ENCODE measurements at regions of chr19 and their contacts with region 1.

Region 1: DNA sequence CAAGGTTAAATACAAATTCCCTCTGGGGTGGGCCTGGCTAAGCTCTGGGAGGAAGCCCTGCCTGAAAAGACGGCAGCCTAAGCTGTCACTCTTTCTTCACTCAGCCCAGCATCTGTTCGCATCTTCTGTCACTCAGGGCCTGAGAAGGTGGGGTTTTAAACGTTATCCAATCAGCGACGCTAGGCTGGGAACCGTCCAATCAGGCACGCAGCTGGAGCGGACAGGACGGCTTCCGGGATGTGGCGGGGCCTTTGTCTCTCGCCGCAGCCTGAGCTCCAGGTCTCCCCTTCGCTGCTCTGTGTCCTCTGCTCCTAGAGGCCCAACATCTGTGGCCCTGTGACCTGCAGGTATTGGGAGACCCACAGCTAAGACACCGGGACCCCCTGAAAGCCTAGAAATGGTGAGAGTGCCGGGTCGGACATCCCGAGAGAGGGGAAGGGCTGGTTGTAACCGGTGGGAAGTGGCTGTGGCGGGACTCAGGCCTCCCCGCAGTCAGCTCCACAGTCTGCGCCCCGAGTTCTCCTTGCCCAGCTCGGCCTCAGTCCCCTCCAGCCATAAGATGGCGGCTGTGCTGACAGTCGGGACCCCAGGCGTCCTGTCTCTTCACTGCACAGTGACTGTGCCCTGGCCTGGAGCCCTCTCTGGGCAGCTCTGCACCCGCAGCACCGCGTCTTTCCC is at the start of gene ZNF431:
- DNase-seq: peak; percentile 95
- ATAC-seq: peak; percentile 99
- H3K4me3 Mint-ChIP-seq: peak within 1 kb of the TSS; percentile 98
- H3K27ac Mint-ChIP-seq: peak within 1 kb of the TSS; percentile 97
- H3K4me1 Mint-ChIP-seq: peaks cover 24% of the 10 kb centered on the region
- H3K27me3 Mint-ChIP-seq: no peaks in the 10 kb centered on the region
- total RNA-seq, gene ZNF431: 22.6 to 23.9 TPM

Region 2: GRCh38 chr19:20999731-21000352 is 142.1 kb before region 1 on chr19:
- CTCF ChIA-PET with region 1: no interaction called
- POLR2A ChIA-PET with region 1: interaction called, 14 read pairs
- DNase-seq: peak; percentile 94
- ATAC-seq: peak; percentile 100
- H3K4me3 Mint-ChIP-seq: peak overlapping the region; percentile 95
- H3K27ac Mint-ChIP-seq: peak overlapping the region; percentile 96
- H3K4me1 Mint-ChIP-seq: peaks cover 27% of the 10 kb centered on the region
- H3K27me3 Mint-ChIP-seq: no peaks in the 10 kb centered on the region

Region 3: DNA sequence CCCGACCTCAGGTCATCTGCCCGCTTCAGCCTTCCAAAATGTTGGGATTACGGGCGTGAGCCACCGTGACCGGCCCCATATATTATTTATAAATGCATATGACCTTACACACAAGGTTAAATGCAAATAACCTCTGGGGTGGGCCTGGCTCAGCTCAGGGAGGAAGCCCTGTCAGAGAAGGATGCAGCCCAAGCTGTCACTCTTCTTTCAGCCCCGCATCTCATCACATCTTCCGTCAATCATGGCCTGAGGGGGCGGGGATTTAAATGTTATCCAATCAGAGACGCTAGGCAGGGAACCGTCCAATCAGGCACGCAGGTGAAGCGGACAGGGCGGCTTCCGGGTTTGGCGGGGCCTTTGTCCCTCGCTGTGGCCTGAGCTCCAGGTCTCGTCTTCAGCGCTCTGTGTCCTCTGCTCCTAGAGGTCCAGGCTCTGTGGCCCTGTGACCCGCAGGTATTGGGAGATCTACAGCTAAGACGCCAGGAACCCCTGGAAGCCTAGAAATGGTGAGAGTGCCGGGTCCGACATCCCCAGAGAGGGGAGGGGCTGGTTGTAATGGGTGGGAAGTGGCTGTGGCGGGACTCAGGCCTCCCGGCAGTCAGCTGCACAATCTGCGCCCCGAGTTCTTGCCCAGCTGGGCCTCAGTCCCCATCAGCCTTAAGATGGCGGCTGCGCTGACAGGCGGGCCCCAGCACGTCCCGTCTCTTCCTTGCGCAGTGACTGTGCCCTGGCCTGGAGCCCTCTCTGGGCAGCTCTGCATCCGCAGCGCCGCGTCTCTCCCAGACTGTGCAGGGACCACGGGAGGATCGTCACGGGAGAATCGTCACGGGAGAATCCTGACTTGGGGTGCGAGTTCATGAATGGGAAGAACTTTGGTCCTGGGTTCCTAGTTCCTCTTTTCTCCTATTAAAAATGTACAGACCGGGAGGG is 121.4 kb before region 1 on chr19 and contains the start of gene ZNF430:
- CTCF ChIA-PET with region 1: interaction called, 4 read pairs
- POLR2A ChIA-PET with region 1: interaction called, 17 read pairs
- DNase-seq: peak; percentile 98
- ATAC-seq: peak; percentile 96
- H3K4me3 Mint-ChIP-seq: peak within 1 kb of the TSS; percentile 99
- H3K27ac Mint-ChIP-seq: peak within 1 kb of the TSS; percentile 99
- H3K4me1 Mint-ChIP-seq: peaks cover 35% of the 10 kb centered on the region
- H3K27me3 Mint-ChIP-seq: no peaks in the 10 kb centered on the region
- total RNA-seq, gene ZNF430: 22.0 to 25.5 TPM

Region 4: DNA sequence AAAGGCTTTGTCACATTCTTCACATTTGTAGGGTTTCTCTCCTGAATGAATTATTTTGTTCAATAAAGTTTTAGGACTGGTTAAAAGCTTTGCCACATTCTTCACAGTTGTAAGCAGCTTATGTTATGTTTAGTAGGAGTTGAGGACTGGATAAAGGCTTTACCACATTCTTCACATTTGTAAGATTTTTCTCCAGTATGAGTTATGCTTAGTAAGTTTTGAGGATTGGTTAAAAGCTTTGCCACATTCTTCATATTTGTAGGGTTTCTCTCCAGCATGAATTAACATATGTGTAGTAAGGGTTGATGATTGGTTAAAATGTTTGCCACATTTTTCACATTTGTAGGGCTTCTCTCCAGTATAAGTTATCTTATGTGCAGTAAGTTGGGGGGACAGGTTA is 79.8 kb after region 1 on chr19:
- CTCF ChIA-PET with region 1: no interaction called
- POLR2A ChIA-PET with region 1: no interaction called
- DNase-seq: no peak
- ATAC-seq: no peak
- H3K4me3 Mint-ChIP-seq: no peak overlapping the region
- H3K27ac Mint-ChIP-seq: no peak overlapping the region
- H3K4me1 Mint-ChIP-seq: no peaks in the 10 kb centered on the region
- H3K27me3 Mint-ChIP-seq: peaks cover 5% of the 10 kb centered on the region

Measured in activated CD8-positive, alpha-beta T cell treated with anti-CD3 and anti-CD28 coated beads, Interleukin-2, amount 10 ng/mL, durations not matched to agents 7 days and 5 days (primary cell).